A673 (cell line): ENCODE measurements at regions of chr1 and their contacts with region 1.

Region 1: DNA sequence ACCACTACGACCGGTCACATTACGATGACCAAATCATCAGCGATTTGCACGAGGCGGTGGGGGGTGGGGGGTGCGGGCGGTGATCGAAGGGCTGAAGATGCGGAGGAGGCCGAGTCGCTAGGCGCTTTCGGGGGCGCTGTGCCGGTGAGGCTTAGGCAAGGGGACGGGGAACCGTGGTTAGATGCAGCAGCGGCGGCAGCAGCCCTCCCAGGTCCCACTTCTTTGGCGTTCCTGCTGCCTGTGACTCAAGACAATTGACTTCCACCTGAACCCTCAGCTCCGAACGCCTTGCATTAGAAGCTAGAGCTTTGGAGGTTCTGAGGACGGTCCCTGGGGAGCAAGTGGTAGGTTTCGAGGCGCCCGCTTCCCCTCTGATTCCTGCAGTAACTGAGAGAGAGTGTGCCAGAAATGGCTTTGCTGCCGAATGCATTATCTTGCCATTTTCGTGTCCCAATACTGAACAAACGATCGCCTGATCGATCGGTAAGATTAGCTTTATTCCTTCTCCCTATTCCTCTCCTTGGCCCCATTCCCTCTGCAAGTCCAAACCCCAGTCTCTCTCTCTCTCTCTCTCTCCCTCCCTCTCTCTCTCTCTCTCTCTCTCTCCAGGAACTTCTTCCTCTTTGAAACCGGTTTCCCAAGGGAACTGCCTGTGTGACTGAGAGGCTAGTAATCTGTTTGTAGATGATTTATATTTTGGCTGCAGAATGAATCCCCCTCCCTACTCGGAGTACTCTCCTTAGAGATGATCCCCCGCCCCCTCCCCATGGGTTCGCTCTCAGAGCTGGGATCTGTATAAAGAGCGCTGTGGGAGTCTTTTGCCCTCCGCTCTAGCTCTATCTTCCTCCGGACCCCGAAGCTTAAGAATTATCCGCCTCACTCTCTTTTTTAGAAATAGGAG is 735 bp upstream of the BRINP3 start:
- DNase-seq: peak; percentile 82
- H3K4me3 ChIP-seq: peak overlapping the region; percentile 56
- H3K27ac ChIP-seq: peak overlapping the region; percentile 16
- H3K4me1 ChIP-seq: peaks cover 15% of the 10 kb centered on the region
- H3K27me3 ChIP-seq: no peaks in the 10 kb centered on the region
- CTCF ChIP-seq: peak; percentile 37; the same call in 1 of the 2 replicates

Region 2: DNA sequence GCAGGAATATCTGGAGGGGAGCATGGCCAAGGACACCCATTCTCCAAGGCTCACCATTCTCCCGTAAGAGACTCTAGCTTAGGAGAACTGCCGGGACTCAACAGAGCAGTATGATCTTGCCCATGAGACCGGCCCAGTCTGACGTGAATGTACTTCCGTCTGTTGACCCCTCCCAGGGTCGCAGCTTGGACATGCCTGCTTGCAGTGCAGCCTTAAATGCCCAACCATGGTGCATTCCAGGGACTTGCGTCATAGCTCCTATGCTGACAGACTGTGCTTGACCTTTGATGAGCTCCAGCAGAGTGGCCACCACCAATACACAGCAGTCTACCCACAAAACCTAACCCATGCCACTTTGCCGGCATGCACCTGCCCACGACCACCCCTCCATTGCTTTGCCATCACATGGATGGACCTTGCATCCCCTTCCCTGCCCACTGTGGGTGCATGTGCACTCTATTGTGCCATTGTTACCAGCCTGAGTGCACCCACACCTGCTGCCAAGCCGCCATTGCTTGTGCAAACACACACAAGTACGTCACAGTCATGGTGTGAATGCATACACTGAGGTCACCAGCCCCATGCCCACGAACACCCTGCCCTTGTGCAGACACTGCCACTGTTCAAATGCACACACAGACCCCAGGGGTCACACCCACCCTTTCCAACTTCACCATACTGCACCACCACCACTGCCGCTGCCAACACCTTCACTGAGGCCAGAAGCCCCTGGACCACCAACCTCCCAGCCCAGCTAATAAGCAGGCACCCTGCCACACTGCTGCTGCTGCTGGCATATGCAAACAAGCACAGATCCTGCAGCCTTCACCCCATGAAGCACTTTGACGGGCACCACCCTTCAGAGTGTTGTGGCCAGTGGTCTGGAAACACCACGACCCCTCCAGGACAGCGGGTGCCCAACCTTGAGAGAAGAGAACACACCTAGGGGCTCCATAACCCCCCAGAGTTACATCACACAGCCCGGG is 1142.0 kb before region 1 on chr1:
- CTCF ChIA-PET with region 1: no interaction called
- POLR2A ChIA-PET with region 1: interaction called, 10 read pairs
- intact Hi-C with region 1: no loop called
- DNase-seq: no peak
- H3K4me3 ChIP-seq: no peak overlapping the region
- H3K27ac ChIP-seq: no peak overlapping the region
- H3K4me1 ChIP-seq: no peaks in the 10 kb centered on the region
- H3K27me3 ChIP-seq: no peaks in the 10 kb centered on the region
- CTCF ChIP-seq: no peak

Region 3: GRCh38 chr1:190376044-190376443 is 102.4 kb before region 1 on chr1:
- CTCF ChIA-PET with region 1: no interaction called
- POLR2A ChIA-PET with region 1: interaction called, 21 read pairs
- intact Hi-C with region 1: no loop called
- DNase-seq: no peak
- H3K4me3 ChIP-seq: no peak overlapping the region
- H3K27ac ChIP-seq: no peak overlapping the region
- H3K4me1 ChIP-seq: peaks cover 6% of the 10 kb centered on the region
- H3K27me3 ChIP-seq: no peaks in the 10 kb centered on the region
- CTCF ChIP-seq: no peak

Region 4: DNA sequence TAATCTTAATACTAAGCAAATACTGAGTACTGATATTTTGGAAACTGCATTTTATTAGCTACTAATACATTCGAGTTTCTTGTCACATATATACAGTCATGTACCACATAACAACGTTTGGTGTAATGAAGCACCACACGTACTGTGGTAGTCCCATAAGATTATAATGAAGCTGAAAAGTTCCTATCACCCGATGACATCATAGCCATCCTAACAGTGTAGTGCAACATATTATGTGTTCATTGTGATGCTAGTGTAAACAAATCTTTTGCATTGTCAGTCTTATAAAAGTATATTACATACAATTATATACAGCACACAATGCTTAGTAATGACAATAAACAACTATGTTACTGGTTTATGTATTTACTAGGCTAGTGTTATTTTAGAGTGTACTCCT is 40.1 kb after region 1 on chr1:
- CTCF ChIA-PET with region 1: no interaction called
- POLR2A ChIA-PET with region 1: no interaction called
- intact Hi-C with region 1: no loop called
- DNase-seq: no peak
- H3K4me3 ChIP-seq: no peak overlapping the region
- H3K27ac ChIP-seq: no peak overlapping the region
- H3K4me1 ChIP-seq: peaks cover 3% of the 10 kb centered on the region
- H3K27me3 ChIP-seq: no peaks in the 10 kb centered on the region
- CTCF ChIP-seq: no peak